WTC11 (cell line): ENCODE measurements at regions of chr1 and their contacts with region 1.

Region 1: GRCh38 chr1:214316593-214316992 is 35.6 kb downstream of the SMYD2 start:
- DNase-seq: peak; percentile 63
- ATAC-seq: peak; percentile 84
- H3K4me3 Mint-ChIP-seq: peak overlapping the region; percentile 44
- H3K27ac Mint-ChIP-seq: peak overlapping the region; percentile 85
- H3K4me1 Mint-ChIP-seq: peaks cover 61% of the 10 kb centered on the region
- H3K27me3 Mint-ChIP-seq: peaks cover 82% of the 10 kb centered on the region
- CTCF ChIP-seq: no peak

Region 2: GRCh38 chr1:214154596-214155292 is 161.8 kb before region 1 on chr1:
- CTCF ChIA-PET with region 1: no interaction called
- POLR2A ChIA-PET with region 1: no interaction called
- DNase-seq: no peak
- ATAC-seq: peak; percentile 55
- H3K4me3 Mint-ChIP-seq: no peak overlapping the region
- H3K27ac Mint-ChIP-seq: no peak overlapping the region
- H3K4me1 Mint-ChIP-seq: peaks cover 18% of the 10 kb centered on the region
- H3K27me3 Mint-ChIP-seq: peaks cover 39% of the 10 kb centered on the region
- CTCF ChIP-seq: no peak

Region 3: DNA sequence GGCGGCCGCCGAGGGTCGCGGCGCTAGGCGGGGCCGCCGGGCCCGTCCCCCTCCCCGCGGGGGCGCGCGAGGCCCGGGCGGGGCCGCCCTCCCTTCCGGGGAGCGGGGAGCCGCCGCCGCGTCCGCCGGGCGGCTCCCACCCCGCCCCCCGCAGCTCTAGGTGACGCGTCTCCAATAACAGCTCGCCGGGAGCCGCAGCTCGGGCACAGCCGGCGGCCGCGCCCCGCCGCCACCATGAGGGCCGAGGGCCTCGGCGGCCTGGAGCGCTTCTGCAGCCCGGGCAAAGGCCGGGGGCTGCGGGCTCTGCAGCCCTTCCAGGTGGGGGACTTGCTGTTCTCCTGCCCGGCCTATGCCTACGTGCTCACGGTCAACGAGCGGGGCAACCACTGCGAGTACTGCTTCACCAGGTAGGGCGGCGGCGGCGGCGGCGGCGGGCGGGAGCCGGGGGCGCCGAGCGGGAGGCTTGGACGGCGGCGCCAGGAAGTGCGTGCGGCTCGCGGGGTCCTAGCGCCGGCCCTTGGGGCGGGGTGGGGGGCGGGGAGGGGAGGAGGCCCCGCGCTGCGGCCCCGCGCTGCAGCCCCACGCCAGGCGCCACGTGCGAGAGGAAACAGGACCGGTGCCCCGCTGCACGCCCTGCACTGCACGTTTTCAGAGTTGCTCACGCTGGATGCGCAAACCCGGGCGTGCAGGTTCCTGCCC is 35.4 kb before region 1 on chr1 and contains the start of gene SMYD2:
- CTCF ChIA-PET with region 1: interaction called, 12 read pairs
- POLR2A ChIA-PET with region 1: interaction called, 3 read pairs
- DNase-seq: peak; percentile 75
- ATAC-seq: peak; percentile 65
- H3K4me3 Mint-ChIP-seq: peak within 1 kb of the TSS; percentile 83
- H3K27ac Mint-ChIP-seq: peak within 1 kb of the TSS; percentile 82
- H3K4me1 Mint-ChIP-seq: peaks cover 37% of the 10 kb centered on the region
- H3K27me3 Mint-ChIP-seq: peaks cover 59% of the 10 kb centered on the region
- CTCF ChIP-seq: no peak
- total RNA-seq, gene SMYD2: 6.3 to 6.8 TPM (median 6.4 TPM) in 3 replicates

Region 4: DNA sequence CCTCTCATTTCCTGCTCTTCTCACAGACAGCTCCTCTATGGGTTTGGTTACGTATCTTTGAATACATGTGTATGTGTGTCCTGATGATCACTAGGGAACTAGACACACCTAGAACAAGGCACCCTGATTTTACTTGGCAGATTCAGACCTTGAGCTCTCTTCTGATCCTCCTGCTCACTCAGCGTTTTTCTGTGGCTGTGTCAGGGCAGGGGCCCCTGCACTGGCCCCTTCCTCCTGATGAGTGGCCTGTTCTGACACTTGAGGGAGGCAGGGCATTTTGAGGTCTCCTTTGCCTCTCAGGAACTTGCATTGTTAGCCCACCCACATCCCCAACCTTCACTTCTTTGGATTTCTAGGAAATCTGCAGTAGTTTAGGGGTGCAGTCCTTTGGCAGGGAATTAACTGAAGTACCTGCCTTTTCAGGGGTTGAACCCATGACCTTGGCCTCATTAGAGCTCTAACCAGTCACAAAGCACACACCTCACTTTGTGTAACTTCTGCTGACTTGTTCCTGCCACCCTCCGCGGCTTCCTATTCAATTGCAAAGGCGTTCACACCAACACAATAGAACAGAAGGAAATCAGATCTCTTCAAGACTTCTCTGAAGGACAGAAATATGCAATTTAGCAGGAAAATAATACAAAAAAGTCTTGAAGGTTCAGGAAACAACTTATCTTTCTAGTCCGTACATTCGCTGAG is 26.9 kb before region 1 on chr1:
- CTCF ChIA-PET with region 1: interaction called, 13 read pairs
- POLR2A ChIA-PET with region 1: interaction called, 3 read pairs
- DNase-seq: peak; percentile 60
- ATAC-seq: peak; percentile 98
- H3K4me3 Mint-ChIP-seq: peak overlapping the region; percentile 56
- H3K27ac Mint-ChIP-seq: no peak overlapping the region
- H3K4me1 Mint-ChIP-seq: peaks cover 54% of the 10 kb centered on the region
- H3K27me3 Mint-ChIP-seq: peaks cover 78% of the 10 kb centered on the region
- CTCF ChIP-seq: no peak

Region 5: DNA sequence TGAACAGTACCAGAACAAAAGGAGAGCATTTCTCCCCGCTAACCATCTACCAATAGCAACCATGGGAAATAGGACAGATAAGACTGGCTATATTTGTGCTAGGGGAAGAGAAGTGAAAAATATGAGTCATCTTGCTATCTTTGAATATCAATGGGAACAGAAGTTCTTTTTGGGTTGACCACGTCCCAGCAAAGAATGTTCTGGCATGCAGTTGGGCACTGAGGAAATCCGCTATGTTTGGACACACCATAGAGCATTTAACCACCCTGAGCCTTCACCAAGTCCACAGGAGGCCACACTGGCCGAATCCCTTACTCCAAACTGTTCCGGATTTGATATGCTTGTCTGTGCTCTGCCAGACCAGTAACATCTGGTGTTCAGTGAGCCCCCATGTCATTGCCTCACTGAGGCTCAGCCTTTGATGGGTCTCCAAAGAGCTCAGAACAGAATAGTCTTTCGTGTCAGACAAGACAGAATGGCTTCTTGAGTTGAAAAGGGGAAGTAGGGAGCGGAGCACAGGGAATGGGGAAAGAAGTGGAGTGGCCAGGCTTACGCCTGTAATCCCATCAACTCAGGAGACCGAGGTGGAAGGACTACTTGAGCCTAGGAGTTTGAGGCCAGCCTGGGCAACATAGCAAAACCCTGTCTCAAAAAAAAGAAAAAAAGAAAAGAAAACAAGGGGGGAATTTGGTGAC is 45.7 kb after region 1 on chr1:
- CTCF ChIA-PET with region 1: no interaction called
- POLR2A ChIA-PET with region 1: no interaction called
- DNase-seq: no peak
- ATAC-seq: no peak
- H3K4me3 Mint-ChIP-seq: no peak overlapping the region
- H3K27ac Mint-ChIP-seq: no peak overlapping the region
- H3K4me1 Mint-ChIP-seq: no peaks in the 10 kb centered on the region
- H3K27me3 Mint-ChIP-seq: no peaks in the 10 kb centered on the region
- CTCF ChIP-seq: no peak